Activated T-helper 1 cell treated with anti-CD3 and anti-CD28 coated beads, Interleukin-12 subunit alpha, Interleukin-12 subunit beta, Interleukin-2, Interleukin-4 antibody, amounts not matched to agents 30 ng/mL and 10 ng/mL and 1 ng/mL, durations not matched to agents 14 hours and 24 hours and 36 hours (primary cell): ENCODE measurements at regions of chr6 and their contacts with region 1.

Region 1: GRCh38 chr6:155117266-155117665 is 122.2 kb downstream of the TIAM2 start:
- DNase-seq: no peak
- H3K4me3 Mint-ChIP-seq: no peak overlapping the region
- H3K27ac Mint-ChIP-seq: peak overlapping the region; percentile 68
- H3K4me1 Mint-ChIP-seq: peaks cover 47% of the 10 kb centered on the region
- H3K27me3 Mint-ChIP-seq: peaks cover 2% of the 10 kb centered on the region

Region 2: DNA sequence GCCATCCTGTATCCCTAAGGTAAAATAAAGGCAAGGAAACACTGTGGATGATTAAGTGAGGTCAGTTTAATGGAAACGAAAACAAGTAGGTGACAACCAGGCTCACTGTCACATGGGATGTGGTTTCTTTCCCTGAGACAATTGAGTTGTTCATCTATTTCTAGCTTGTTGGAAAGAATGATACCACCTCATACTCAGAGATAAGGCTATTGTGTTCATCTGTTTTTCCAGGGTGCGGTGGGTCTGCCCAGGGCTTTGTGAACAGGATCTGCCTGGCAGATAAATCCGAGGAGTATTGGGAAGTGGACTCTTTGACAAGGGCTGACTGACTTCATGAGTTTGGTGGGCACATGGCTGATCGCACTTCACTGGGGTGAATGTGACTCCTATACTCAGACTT is 203.0 kb before region 1 on chr6:
- intact Hi-C with region 1: no loop called
- DNase-seq: no peak
- H3K4me3 Mint-ChIP-seq: no peak overlapping the region
- H3K27ac Mint-ChIP-seq: no peak overlapping the region
- H3K4me1 Mint-ChIP-seq: peaks cover 6% of the 10 kb centered on the region
- H3K27me3 Mint-ChIP-seq: peaks cover 2% of the 10 kb centered on the region

Region 3: GRCh38 chr6:155026022-155026726 is 91.1 kb before region 1 on chr6:
- intact Hi-C with region 1: no loop called
- DNase-seq: no peak
- H3K4me3 Mint-ChIP-seq: no peak overlapping the region
- H3K27ac Mint-ChIP-seq: no peak overlapping the region
- H3K4me1 Mint-ChIP-seq: peaks cover 15% of the 10 kb centered on the region
- H3K27me3 Mint-ChIP-seq: no peaks in the 10 kb centered on the region

Region 4: GRCh38 chr6:155100087-155100486 is 17.2 kb before region 1 on chr6:
- intact Hi-C with region 1: loop called (anchors 2 kb)
- DNase-seq: no peak
- H3K4me3 Mint-ChIP-seq: no peak overlapping the region
- H3K27ac Mint-ChIP-seq: no peak overlapping the region
- H3K4me1 Mint-ChIP-seq: peaks cover 32% of the 10 kb centered on the region
- H3K27me3 Mint-ChIP-seq: no peaks in the 10 kb centered on the region

Region 5: DNA sequence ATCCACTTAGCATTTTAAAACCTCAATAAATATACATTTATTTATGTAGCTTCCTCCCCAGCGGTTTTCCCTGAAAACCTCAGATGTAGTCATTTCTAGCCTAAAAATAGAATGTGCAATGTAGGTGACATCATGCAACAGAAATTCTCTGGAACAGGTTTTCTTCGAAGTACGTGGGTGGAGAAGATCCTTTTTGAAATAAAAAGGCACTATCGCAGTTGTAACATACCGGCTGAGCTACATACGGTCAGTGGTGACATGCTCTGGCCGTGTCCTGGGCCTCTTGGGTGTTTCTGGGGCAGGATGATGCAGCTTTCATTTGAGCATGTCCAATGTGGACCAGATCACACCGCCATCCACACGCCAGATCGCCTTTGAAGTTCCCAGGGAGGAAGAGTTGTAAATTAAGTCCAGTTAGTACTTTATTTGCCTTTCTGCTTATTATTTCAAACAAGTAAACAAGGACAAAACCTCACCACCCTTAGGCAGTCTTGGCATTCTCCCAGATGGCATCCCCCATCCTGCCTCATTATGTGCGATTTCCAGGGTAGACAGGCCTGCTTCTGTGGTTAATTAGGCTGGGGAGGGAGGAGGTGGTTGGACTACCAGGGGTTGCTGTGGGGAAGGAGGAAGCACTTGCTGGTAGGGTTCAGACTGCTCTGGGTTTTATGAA is 37.0 kb after region 1 on chr6:
- intact Hi-C with region 1: loop called (anchors 1 kb)
- DNase-seq: peak; percentile 48
- H3K4me3 Mint-ChIP-seq: peak overlapping the region; percentile 78
- H3K27ac Mint-ChIP-seq: peak overlapping the region; percentile 97
- H3K4me1 Mint-ChIP-seq: peaks cover 90% of the 10 kb centered on the region
- H3K27me3 Mint-ChIP-seq: peaks cover 2% of the 10 kb centered on the region